Activated CD8-positive, alpha-beta T cell treated with anti-CD3 and anti-CD28 coated beads for 36 hours (primary cell): ENCODE measurements at regions of chr10 and their contacts with region 1.

Region 1: DNA sequence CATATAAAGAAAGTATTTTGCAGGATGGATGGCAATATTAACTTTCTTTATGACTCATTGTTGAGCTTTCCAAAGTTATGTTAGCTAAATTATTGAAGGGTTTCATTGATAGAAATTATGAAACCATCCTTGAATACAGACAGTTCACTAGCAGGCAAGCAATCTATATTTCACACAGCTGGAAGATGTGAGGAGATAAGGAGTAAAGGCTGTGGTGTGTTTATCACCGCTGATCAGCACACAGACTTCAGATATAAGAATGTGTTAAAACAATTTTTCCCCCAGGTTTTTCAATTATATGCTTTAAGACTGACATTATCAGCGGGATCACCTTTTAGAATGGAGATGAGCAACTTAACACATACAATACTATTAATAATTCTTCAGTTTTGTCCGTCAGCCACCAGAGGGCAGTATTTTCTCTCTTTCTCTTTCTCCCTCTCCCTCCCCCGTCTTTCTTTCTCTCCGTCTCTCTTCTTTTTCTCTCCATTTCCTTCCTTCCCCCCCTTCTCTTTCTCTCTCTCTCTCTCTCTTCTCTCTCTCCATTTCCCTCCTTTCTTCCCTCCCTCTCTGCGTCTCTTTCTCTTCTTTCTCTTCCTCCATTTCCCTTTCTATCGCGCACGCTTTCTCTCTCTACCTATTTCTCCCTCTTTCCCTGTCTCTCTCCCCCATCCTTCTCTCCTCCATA is 62.9 kb upstream of the FAM171A1 start:
- DNase-seq: peak; percentile 48
- ATAC-seq: peak; percentile 55
- H3K4me3 Mint-ChIP-seq: peak overlapping the region; percentile 47
- H3K27ac Mint-ChIP-seq: no peak overlapping the region
- H3K4me1 Mint-ChIP-seq: no peaks in the 10 kb centered on the region
- H3K27me3 Mint-ChIP-seq: peaks cover 12% of the 10 kb centered on the region
- CTCF ChIP-seq: peak; percentile 79

Region 2: GRCh38 chr10:15485684-15486316 is 51.8 kb after region 1 on chr10:
- CTCF ChIA-PET with region 1: no interaction called
- POLR2A ChIA-PET with region 1: no interaction called
- intact Hi-C with region 1: no loop called
- DNase-seq: no peak
- ATAC-seq: no peak
- H3K4me3 Mint-ChIP-seq: no peak overlapping the region
- H3K27ac Mint-ChIP-seq: no peak overlapping the region
- H3K4me1 Mint-ChIP-seq: no peaks in the 10 kb centered on the region
- H3K27me3 Mint-ChIP-seq: peaks cover 8% of the 10 kb centered on the region
- CTCF ChIP-seq: no peak

Region 3: DNA sequence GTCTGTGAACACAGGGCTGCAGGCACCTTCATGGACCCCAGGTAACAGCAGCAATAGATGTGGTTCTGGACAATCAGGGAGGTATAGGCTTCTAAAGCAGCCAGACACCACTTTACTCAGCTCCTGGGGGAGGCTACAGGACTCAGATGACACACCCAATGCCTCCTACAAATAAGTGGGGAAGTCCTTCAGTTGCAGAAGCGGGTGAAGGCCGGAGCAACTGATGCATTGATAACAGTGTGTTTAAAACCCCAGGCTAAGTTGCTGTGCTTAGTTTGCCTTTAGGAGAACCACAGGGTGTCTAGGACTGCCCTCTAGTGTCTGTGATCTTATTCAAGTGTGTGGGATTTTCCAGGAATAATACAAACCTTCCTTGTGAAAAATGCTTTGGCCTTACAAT is 291.6 kb after region 1 on chr10:
- CTCF ChIA-PET with region 1: interaction called, 3 read pairs
- POLR2A ChIA-PET with region 1: no interaction called
- intact Hi-C with region 1: loop called (anchors 10 kb)
- DNase-seq: no peak
- ATAC-seq: no peak
- H3K4me3 Mint-ChIP-seq: no peak overlapping the region
- H3K27ac Mint-ChIP-seq: no peak overlapping the region
- H3K4me1 Mint-ChIP-seq: no peaks in the 10 kb centered on the region
- H3K27me3 Mint-ChIP-seq: peaks cover 6% of the 10 kb centered on the region
- CTCF ChIP-seq: no peak